PC-9 (cell line): ENCODE measurements at regions of chr1 and their contacts with region 1.

Region 1: GRCh38 chr1:40612345-40612831 is 53.1 kb downstream of the RIMS3 start:
- DNase-seq: peak; percentile 40 to 65
- H3K4me3 ChIP-seq: no peak overlapping the region
- H3K27ac ChIP-seq: no peak overlapping the region
- H3K4me1 ChIP-seq: no peaks in the 10 kb centered on the region
- H3K27me3 ChIP-seq: no peaks in the 10 kb centered on the region
- CTCF ChIP-seq: peak; percentile 86

Region 2: DNA sequence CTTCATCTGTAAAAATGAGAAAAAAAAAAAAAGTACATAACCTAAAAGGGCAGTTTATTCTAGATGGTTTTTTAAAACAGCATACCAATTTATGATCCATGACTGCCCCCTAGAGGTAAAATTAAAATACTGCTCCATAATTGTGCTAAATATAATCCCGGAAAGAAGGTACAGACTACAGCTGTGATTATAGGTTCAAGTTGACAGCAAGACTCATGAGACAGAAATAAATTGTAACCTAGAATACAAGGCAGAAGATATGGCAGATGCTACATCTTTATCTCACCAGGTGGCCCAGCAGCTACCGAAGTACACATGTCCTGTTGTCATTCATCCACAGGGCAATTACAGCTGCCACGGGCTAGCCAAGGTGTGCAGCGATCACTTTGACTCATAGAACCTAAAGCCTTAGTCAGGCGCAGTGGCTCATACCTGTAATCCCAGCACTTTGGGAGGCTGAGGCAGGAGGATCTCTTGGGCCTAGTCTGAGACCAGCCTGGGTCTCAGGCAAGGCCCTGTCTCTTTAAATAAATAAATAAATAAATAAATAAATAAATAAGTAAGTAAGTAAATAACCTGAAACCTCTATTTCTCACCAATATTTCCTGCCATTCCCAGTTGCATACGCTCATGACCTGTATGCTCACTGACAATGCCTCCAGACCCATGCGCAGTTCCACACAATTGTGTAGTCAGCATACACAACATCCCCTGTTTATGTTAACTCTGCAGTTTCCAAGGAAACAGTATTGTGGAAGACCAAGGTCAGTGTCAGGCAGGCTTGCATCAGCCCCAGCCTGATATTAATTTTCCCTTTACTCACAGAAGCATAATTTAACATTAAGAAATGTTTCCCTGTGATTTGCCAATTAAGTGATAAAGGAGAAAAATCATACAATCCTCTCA is 892.0 kb before region 1 on chr1:
- CTCF ChIA-PET with region 1: interaction called, 14 read pairs
- POLR2A ChIA-PET with region 1: no interaction called
- intact Hi-C with region 1: no loop called
- DNase-seq: peak; percentile 6 to 61
- H3K4me3 ChIP-seq: no peak overlapping the region
- H3K27ac ChIP-seq: no peak overlapping the region
- H3K4me1 ChIP-seq: no peaks in the 10 kb centered on the region
- H3K27me3 ChIP-seq: peaks cover 5% of the 10 kb centered on the region; the same call in 1 of the 2 replicates
- CTCF ChIP-seq: peak; percentile 89

Region 3: GRCh38 chr1:40563266-40563665 is 49.1 kb before region 1 on chr1:
- CTCF ChIA-PET with region 1: no interaction called
- POLR2A ChIA-PET with region 1: no interaction called
- intact Hi-C with region 1: no loop called
- DNase-seq: no peak
- H3K4me3 ChIP-seq: no peak overlapping the region
- H3K27ac ChIP-seq: no peak overlapping the region
- H3K4me1 ChIP-seq: no peaks in the 10 kb centered on the region
- H3K27me3 ChIP-seq: no peaks in the 10 kb centered on the region
- CTCF ChIP-seq: no peak

Region 4: GRCh38 chr1:40709100-40709801 is 96.9 kb after region 1 on chr1:
- CTCF ChIA-PET with region 1: no interaction called
- POLR2A ChIA-PET with region 1: no interaction called
- intact Hi-C with region 1: no loop called
- DNase-seq: peak; percentile 82 to 94
- H3K4me3 ChIP-seq: peak overlapping the region; percentile 62
- H3K27ac ChIP-seq: peak overlapping the region; percentile 21
- H3K4me1 ChIP-seq: peaks cover 43% of the 10 kb centered on the region
- H3K27me3 ChIP-seq: no peaks in the 10 kb centered on the region
- CTCF ChIP-seq: no peak

Region 5: DNA sequence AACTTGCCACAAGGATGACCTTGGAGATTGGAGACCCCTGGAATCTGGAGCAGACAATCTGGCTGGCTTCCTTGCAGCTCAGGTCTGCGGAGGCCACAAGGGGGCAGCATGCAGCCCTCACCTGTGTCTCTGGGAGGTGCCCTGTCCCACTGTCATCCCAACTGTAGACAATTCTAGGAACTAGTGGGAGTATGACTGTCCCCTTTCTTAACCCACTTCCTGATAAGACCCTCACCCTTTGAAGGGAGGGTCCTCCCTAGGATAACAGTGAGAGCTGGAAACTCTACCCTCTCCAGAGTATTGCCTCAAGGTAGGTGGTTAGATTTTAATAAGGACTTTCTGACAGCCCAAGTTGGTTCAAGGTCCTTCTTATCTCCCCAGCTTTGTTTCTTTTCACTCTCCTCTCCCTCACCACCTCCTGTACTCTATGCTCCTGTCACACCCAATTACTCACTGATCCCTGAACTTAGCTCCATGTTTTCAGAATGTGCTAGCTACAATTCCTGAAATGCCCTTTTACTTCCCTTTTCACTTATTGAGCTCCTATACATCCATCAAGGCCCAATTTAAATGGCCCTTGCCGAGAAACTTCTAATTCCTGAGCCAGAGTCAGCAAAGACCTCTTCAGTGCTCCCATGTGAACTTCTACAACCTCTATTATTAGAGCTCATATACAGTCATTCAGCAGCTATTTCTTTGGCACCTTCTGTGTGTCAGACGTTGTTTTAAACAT is 162.0 kb after region 1 on chr1:
- CTCF ChIA-PET with region 1: no interaction called
- POLR2A ChIA-PET with region 1: no interaction called
- intact Hi-C with region 1: loop called (anchors 5 kb)
- DNase-seq: peak; percentile 38 to 68
- H3K4me3 ChIP-seq: no peak overlapping the region
- H3K27ac ChIP-seq: no peak overlapping the region
- H3K4me1 ChIP-seq: no peaks in the 10 kb centered on the region
- H3K27me3 ChIP-seq: no peaks in the 10 kb centered on the region
- CTCF ChIP-seq: peak; percentile 87